ENCODE measurements at regions of chr9 and their contacts with region 1.

Region 1: DNA sequence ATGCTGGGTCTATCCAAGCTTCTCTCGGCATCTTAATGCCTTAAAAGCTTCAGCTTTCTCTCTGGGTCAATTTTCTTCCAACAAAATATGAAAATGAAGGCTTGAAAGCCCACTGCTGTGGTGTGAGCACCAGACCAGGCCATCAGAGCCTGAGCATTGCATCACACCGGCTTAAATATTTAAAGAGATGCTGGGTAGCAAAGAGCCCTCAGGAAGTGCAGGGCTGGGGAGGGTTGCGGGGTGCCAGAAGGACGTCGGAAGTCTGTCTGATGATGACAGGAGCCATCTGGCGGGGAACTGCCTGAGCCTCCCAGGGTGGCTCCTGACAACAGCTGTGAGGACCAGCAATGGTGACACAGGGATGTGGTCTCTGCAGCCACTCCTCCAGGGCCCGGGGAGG is 185.5 kb downstream of the OLFM1 start:
- DNase-seq: no peak
- H3K4me3 ChIP-seq: no peak overlapping the region
- H3K27ac ChIP-seq: no peak overlapping the region
- H3K27me3 ChIP-seq: peaks cover 0 to 4% (median 0%) of the 10 kb centered on the region in 45 donors
- CTCF ChIP-seq: no peak

Region 2: GRCh38 chr9:135186248-135187164 is 86.5 kb before region 1 on chr9:
- intact Hi-C with region 1: no loop called
- DNase-seq: no peak
- H3K4me3 ChIP-seq: no peak overlapping the region
- H3K27ac ChIP-seq: no peak overlapping the region
- H3K27me3 ChIP-seq: peaks cover 0 to 21% (median 0%) of the 10 kb centered on the region in 45 donors
- CTCF ChIP-seq: no peak

Region 3: DNA sequence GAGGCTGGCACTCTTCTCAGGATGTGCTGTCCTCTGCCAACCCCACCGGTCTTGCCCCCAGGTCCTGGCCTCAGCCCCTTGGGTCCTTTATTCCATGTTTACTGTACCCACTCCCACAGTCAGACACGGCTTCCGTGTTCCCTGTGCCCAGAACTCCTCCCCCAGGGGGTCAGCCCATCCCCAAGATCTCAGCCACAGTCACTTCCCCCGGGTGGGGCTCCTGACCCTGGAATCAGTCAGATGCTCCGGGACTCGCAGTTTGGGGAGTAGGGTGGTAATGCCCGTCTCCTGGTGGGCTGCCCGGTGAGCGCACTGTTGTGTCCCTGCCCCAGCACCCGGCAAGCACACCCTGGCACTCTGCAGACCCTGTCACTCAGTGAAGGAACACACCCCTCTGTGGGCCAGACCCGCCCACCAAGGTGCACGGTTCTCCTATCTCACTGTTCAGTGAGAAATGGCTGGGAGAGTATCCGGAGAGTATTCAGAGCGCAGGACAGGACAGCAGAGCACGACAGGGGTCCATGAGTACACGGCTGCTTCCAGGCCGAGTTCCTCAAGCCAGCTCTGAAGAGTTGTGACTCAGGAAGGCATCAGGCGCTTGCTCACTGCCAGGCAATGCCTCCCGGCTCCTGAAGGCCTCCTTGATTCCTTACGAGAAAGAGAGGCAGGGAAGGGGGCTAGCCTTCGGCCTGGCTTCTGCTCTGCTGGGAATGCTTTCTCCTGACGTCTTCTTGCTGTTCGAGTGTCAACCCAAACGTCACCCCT is 74.3 kb after region 1 on chr9:
- intact Hi-C with region 1: no loop called
- DNase-seq: peak in 3 of 10 donors; percentile 32 to 69 (median 50)
- H3K4me3 ChIP-seq: no peak overlapping the region
- H3K27ac ChIP-seq: peak overlapping the region in 49 of 59 donors; percentile 9 to 88 (median 70)
- H3K27me3 ChIP-seq: peaks cover 0 to 36% (median 0%) of the 10 kb centered on the region in 45 donors
- CTCF ChIP-seq: no peak

Region 4: GRCh38 chr9:135692410-135692809 is 419.4 kb after region 1 on chr9:
- intact Hi-C with region 1: loop called in 1 of 2 experiments (anchors 5 kb)
- DNase-seq: peak in 9 of 10 donors; percentile 41 to 88 (median 78)
- H3K4me3 ChIP-seq: no peak overlapping the region
- H3K27ac ChIP-seq: peak overlapping the region in 51 of 59 donors; percentile 28 to 95 (median 79)
- H3K27me3 ChIP-seq: peaks cover 0 to 2% (median 0%) of the 10 kb centered on the region in 45 donors
- CTCF ChIP-seq: no peak

Measured in dorsolateral prefrontal cortex (tissue), 120 donors.